BJ (cell line): ENCODE measurements at regions of chr19 and their contacts with region 1.

Region 1: DNA sequence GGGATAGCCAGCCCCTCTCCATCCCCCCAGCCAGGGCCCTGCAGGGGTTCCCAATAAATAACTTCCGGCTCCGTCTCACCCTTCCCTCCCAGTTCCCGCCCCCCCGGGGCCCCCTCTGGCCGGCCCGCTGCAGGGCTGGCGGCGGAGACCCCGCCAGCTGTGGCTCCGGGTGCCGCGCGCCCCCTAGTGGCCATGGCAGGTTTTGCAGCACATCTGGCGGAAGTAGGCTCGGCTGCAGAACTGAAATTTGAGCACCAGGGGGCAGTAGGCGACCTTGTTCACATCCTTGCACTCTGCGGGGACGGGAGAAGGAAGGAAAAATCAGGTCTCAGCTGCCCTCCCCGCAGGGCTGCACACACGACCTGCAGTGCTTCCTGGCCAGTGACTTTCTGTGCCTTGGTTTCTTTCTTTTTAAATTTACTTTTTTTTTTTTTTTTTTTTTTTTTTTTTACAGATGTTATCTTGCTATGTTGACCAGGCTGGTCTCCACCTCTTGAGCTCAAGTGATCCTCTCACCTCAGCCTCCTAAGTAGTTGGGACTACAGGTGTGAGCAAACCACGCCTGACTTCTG is 3.6 kb upstream of the MYO1F start:
- DNase-seq: no peak
- H3K4me3 ChIP-seq: no peak overlapping the region
- H3K27me3 ChIP-seq: no peaks in the 10 kb centered on the region; the same call in 1 of the 2 replicates
- CTCF ChIP-seq: peak; percentile 96

Region 2: GRCh38 chr19:8252922-8253589 is 327.7 kb before region 1 on chr19:
- CTCF ChIA-PET with region 1: no interaction called
- POLR2A ChIA-PET with region 1: no interaction called
- DNase-seq: no peak
- H3K4me3 ChIP-seq: no peak overlapping the region
- H3K27me3 ChIP-seq: no peaks in the 10 kb centered on the region
- CTCF ChIP-seq: peak; percentile 91

Region 3: GRCh38 chr19:8449830-8450229 is 131.0 kb before region 1 on chr19:
- CTCF ChIA-PET with region 1: interaction called, 4 read pairs
- POLR2A ChIA-PET with region 1: interaction called, 11 read pairs
- DNase-seq: no peak
- H3K4me3 ChIP-seq: no peak overlapping the region
- H3K27me3 ChIP-seq: no peaks in the 10 kb centered on the region
- CTCF ChIP-seq: no peak

Region 4: GRCh38 chr19:8526345-8527067 is 54.3 kb before region 1 on chr19:
- CTCF ChIA-PET with region 1: interaction called, 26 read pairs
- POLR2A ChIA-PET with region 1: no interaction called
- DNase-seq: peak; percentile 60
- H3K4me3 ChIP-seq: peak overlapping the region; percentile 81
- H3K27me3 ChIP-seq: no peaks in the 10 kb centered on the region
- CTCF ChIP-seq: no peak

Region 5: DNA sequence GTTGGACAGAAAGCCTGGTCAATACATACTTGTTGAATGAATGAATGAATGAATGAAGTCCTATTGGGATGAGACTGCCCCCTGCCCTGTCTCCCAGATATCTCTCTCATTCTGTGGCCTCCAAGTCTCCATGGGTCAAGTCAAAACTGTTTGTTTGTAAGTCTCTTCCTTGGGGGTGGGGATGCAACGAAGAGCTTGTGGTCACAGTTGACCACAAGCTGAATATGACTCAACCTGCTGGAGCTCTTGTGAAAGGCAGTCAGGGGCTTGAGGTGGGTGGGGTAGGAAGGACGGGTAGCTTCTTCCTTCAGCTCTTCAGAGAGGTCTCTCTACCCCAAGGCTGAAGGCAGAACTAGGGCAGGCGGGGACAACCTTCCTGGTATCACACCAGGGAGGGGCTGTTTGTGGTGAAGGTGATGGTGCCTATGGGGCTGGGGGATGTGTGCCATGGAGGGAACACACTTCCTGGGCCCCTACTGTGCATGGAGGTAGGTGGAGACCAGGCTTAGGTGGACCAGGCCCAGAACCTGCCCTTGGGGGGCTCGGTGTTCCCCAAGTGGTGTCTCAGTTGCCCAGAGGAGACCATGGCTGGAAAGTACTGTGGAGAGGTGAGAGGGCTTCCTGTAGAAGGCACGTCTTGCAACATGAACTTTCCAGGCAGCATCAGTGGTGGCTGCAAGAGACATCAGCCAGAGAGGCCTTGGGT is 11.6 kb before region 1 on chr19:
- CTCF ChIA-PET with region 1: interaction called, 83 read pairs
- POLR2A ChIA-PET with region 1: no interaction called
- DNase-seq: peak; percentile 79
- H3K4me3 ChIP-seq: no peak overlapping the region
- H3K27me3 ChIP-seq: no peaks in the 10 kb centered on the region
- CTCF ChIP-seq: no peak

Region 6: GRCh38 chr19:8641908-8642547 is 61.2 kb after region 1 on chr19:
- CTCF ChIA-PET with region 1: interaction called, 55 read pairs
- POLR2A ChIA-PET with region 1: no interaction called
- DNase-seq: no peak
- H3K4me3 ChIP-seq: no peak overlapping the region
- H3K27me3 ChIP-seq: no peaks in the 10 kb centered on the region
- CTCF ChIP-seq: peak; percentile 59

Region 7: DNA sequence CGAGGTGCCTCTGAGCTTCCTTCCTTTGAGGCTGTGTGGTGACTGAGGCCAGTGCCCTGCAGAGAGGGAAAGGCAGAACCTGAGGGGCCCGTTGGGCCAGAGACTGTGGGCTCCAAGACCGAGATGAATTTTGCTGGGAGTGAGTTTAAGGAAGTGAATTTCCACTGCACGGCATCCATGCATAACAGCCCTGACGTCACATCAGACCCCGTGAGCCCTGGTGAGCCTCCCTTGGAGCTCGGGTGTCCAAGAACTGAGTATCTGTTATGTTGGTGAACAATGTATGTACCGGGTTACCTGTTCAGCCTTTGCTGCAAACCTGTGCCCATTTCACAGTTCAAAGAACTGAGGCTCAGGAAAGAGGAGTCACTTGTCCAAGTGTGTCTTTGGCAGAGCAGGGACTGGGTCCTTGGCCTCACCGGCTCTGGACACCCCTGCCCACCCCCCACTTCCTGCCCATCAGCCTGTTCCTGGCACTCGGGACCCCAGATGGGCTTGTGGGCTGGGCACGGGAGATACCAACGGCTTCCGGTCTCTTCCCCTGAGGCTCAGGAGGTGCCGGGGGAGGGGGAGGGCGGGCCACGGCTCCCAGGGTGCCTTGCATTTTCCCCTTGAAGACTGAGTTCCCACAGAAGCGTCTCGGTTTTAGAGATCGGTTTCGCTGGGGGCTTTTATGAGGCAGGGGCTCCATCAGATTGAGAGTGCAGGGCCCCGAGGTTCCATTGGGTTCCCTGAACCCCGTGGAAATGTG is 83.3 kb after region 1 on chr19:
- CTCF ChIA-PET with region 1: no interaction called
- POLR2A ChIA-PET with region 1: no interaction called
- DNase-seq: no peak
- H3K4me3 ChIP-seq: no peak overlapping the region
- H3K27me3 ChIP-seq: no peaks in the 10 kb centered on the region
- CTCF ChIP-seq: no peak